HepG2 (cell line): ENCODE measurements at regions of chr16 and their contacts with region 1.

Region 1: DNA sequence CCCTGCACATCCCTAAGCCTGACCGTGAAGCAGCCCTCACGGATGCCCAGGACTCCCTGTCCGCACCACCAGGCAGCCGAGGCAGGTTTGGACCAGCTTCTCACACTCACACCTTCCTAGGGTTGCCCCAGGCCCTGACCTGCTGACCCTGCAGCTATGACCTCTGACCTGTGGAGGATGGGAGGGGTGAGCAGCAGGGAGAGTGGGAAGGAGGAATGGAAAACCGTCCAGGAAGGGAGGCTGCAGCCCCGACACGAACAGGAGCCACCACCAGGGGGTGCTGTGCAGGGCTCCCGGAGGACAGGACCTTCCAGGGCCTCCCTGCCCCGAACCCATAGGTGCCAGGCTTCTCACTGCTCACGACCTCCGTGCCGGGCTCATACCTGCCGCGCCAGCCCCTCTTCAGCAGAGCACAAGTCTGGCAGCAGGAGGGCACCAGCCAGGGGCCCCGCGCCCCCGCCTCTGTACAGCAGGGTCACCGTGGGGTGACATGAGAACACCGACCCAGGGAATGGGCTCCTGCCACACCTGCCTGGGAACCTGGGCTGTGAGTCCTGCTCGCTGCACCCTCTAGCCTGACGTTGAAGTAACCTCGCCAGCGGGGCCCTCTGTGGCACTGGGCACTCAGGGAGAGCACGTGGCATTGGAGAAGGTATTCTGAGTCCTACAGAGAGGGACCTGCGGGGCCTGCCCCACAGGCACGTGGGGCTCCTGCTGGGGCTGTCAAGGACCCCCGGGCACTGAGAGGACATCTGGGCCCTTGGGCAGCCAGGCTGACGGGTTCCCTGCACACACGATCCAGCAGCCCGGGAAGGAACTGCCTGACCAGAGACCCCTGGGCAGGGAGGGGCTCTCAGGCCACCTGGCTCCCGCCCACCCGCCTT is 37.6 kb downstream of the CTU2 start:
- DNase-seq: peak; percentile 60
- ATAC-seq: peak; percentile 77
- H3K4me3 ChIP-seq: no peak overlapping the region
- H3K27ac ChIP-seq: no peak overlapping the region
- H3K4me1 ChIP-seq: no peaks in the 10 kb centered on the region
- H3K27me3 ChIP-seq: no peaks in the 10 kb centered on the region; a peak in 1 of 5 replicates
- CTCF ChIP-seq: peak; percentile 95
- EP300 ChIP-seq: no peak
- POLR2A ChIP-seq: no peak
- RAD21 ChIP-seq: peak; percentile 84

Region 2: DNA sequence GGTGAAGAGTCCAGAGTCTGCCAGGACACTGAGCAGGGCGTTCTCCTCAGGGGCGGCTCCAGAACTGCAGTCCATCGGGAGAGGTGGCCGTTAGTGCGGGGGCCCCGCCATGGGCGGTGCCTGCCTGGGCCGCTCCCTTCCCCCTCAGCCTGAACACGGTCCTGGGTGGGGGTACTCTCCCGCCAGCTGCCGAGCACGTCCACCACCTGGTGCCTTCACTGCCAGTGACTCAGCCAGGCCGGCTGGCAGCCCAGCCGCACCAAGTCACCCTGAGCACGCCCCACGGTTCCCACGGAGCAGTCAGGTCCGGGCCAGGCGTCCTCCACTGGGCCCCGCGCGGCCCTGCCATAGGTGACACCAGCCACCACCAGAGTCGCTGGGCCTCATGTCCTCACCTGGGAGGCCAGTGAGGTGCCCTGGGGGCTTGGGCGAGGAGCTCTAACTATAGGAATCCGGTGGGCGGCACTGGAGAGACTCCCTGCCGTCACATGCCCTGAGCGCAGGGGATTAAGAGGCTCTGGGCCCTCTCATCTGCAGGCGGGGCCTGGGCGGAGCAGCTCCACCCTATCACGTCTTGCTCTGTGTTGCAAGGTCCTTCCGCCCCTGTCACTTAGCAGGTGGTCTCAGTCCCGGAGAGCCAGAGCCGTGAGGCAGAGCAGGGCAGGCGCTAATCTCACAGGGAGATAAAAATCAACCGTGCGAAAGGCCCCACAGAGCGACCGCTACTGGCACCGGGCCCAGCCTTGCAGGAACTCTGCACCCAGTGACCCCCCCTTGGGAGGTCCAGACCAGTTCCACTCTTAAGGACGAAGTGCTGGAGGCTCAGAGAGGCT is 26.7 kb after region 1 on chr16:
- CTCF ChIA-PET with region 1: no interaction called
- POLR2A ChIA-PET with region 1: no interaction called
- in situ Hi-C with region 1: no loop called
- intact Hi-C with region 1: loop called (anchors 1 kb)
- DNase-seq: peak; percentile 81
- ATAC-seq: peak; percentile 64
- H3K4me3 ChIP-seq: peak overlapping the region in 2 of 3 experiments; percentile 19 to 41; a peak in 3 of 6 replicates
- H3K27ac ChIP-seq: peak overlapping the region; percentile 26
- H3K4me1 ChIP-seq: peaks cover 36% of the 10 kb centered on the region
- H3K27me3 ChIP-seq: no peaks in the 10 kb centered on the region
- CTCF ChIP-seq: peak; percentile 17; the same call in 1 of the 2 replicates
- EP300 ChIP-seq: no peak
- POLR2A ChIP-seq: 0 out of 4 replicates have a peak, but pooled peaks of 1 of the 2 experiments have one; percentile 24
- RAD21 ChIP-seq: no peak

Region 3: DNA sequence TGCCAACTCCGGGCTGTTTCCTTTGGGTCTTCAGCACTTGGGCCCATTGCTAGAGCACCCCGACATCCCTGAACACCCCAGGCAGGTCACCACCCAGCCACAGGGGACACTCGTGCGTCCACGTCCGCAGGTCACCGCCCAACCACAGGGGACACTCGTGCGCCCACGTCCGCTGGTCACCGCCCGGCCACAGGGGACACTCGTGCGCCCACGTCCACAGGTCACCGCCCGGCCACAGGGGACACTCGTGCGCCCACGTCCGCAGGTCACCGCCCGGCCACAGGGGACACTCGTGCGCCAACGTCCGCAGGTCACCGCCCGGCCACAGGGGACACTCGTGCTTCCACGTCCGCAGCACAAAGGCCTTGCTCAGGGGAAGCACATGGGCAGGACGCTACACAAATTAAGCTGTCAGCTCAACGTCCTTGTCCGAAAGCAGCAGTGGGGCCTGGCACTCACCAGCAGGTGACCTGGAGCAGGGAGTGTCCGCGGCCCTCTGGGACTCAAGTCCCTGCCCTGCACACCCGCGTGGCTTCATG is 95.1 kb after region 1 on chr16:
- CTCF ChIA-PET with region 1: interaction called, 12 read pairs
- POLR2A ChIA-PET with region 1: no interaction called
- in situ Hi-C with region 1: no loop called
- intact Hi-C with region 1: no loop called
- DNase-seq: peak; percentile 71
- ATAC-seq: peak; percentile 33
- H3K4me3 ChIP-seq: no peak overlapping the region
- H3K27ac ChIP-seq: peak overlapping the region; percentile 7
- H3K4me1 ChIP-seq: no peaks in the 10 kb centered on the region
- H3K27me3 ChIP-seq: no peaks in the 10 kb centered on the region
- CTCF ChIP-seq: peak; percentile 93
- EP300 ChIP-seq: 0 out of 4 replicates have a peak, but pooled peaks of 1 of the 2 experiments have one; percentile 14
- POLR2A ChIP-seq: no peak
- RAD21 ChIP-seq: no peak; the same call in 1 of the 2 replicates